ENCODE measurements at regions of chr2 and their contacts with region 1.

Region 1: GRCh38 chr2:199572571-199572970 is 114.8 kb upstream of the SATB2 start:
- DNase-seq: no peak
- ATAC-seq: no peak
- H3K4me3 ChIP-seq: no peak overlapping the region
- H3K27ac ChIP-seq: no peak overlapping the region
- H3K4me1 ChIP-seq: no peaks in the 10 kb centered on the region
- H3K27me3 ChIP-seq: no peaks in the 10 kb centered on the region; the same call in 1 of the 2 replicates
- CTCF ChIP-seq: no peak
- POLR2A ChIP-seq: no peak
- RAD21 ChIP-seq: no peak

Region 2: GRCh38 chr2:200172944-200173581 is 600.5 kb after region 1 on chr2:
- CTCF ChIA-PET with region 1: no interaction called
- POLR2A ChIA-PET with region 1: no interaction called
- RAD21 ChIA-PET with region 1: no interaction called
- intact Hi-C with region 1: loop called (anchors 5 kb)
- DNase-seq: no peak
- ATAC-seq: no peak
- H3K4me3 ChIP-seq: no peak overlapping the region
- H3K27ac ChIP-seq: no peak overlapping the region
- H3K4me1 ChIP-seq: no peaks in the 10 kb centered on the region
- H3K27me3 ChIP-seq: no peaks in the 10 kb centered on the region
- CTCF ChIP-seq: no peak
- POLR2A ChIP-seq: no peak
- RAD21 ChIP-seq: no peak